ENCODE measurements at regions of chr7 and their contacts with region 1.

Region 1: DNA sequence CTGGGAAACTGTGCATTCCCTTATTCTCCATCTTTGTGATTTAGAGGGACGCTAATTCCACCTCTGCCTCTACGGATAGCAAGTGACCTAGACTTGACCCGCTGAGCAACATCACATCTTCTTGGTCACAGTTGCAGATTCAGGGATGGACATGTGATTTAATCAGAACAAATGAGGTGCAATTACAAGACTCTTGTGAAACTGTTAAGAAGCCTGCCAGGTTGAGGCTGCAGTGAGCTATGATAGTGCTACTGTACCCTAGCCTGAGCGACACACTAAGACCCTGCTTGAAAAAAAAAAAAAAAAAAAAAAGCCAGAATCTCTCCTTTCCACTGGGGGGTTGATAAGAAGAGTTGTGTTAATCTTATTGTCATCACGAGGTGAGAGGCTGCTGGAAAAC is 14.4 kb downstream of the MPLKIP start:
- DNase-seq: no peak
- H3K4me3 ChIP-seq: no peak overlapping the region
- H3K27ac ChIP-seq: no peak overlapping the region
- H3K4me1 ChIP-seq: no peaks in the 10 kb centered on the region
- H3K27me3 ChIP-seq: no peaks in the 10 kb centered on the region

Region 2: DNA sequence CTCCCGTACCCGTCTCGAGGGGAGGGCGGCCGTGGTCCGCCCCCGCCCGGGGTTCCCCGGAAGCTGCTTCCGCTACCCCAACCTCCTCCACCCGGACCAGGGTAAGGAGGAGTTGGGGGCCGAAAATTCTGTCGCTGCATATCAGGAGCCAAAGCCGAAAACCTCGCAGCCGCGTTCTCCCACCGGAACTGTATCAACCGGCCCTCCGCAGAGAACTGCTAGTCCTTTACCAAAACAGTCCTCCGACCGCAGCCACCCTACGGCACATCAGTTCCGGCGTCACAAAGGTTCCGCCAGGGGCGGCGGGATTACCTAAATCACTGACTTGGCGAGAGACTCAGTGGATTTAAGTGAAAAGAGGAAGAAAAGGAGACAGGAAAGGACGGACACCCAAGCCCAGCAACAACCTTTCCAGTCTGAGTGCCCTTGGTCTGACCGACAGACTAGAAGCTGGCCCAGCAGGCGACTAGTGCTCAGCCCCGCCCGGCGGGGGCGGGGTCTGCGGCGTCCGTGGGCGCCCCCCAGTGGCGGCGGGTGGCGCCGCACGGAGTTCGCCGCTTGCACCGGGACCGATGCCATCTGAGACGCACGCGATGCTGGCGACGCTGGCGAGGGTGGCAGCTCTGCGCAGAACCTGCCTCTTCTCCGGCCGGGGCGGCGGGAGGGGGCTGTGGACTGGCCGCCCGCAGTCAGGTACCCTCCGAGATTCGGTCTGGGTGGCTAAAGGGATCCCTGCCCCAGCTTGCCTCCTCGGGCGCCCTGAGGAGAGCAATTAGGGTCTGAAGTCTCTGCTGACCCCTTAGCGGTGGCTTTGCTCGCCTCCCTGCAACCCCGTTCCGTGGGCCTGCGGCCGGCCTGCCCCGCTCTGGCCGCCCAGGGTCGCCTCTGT is 14.7 kb after region 1 on chr7 and contains the starts of genes MPLKIP and SUGCT:
- CTCF ChIA-PET with region 1: interaction called, 12 read pairs
- POLR2A ChIA-PET with region 1: no interaction called
- DNase-seq: peak; percentile 92 to 96 (median 95)
- H3K4me3 ChIP-seq: peak within 1 kb of the TSS; percentile 84 to 99 (median 95)
- H3K27ac ChIP-seq: peak within 1 kb of the TSS; percentile 93 to 96
- H3K4me1 ChIP-seq: peaks cover 5 to 20% (median 12%) of the 10 kb centered on the region in 4 experiments
- H3K27me3 ChIP-seq: peaks cover 0 to 4% (median 0%) of the 10 kb centered on the region in 5 experiments

Region 3: GRCh38 chr7:40263752-40264390 is 143.9 kb after region 1 on chr7:
- CTCF ChIA-PET with region 1: no interaction called
- POLR2A ChIA-PET with region 1: no interaction called
- DNase-seq: no peak
- H3K4me3 ChIP-seq: no peak overlapping the region
- H3K27ac ChIP-seq: no peak overlapping the region
- H3K4me1 ChIP-seq: peaks cover 0 to 23% (median 8%) of the 10 kb centered on the region in 4 experiments
- H3K27me3 ChIP-seq: no peaks in the 10 kb centered on the region

Region 4: GRCh38 chr7:40761762-40762560 is 641.9 kb after region 1 on chr7:
- CTCF ChIA-PET with region 1: no interaction called
- POLR2A ChIA-PET with region 1: no interaction called
- DNase-seq: no peak
- H3K4me3 ChIP-seq: no peak overlapping the region
- H3K27ac ChIP-seq: no peak overlapping the region
- H3K4me1 ChIP-seq: peaks cover 3 to 30% (median 6%) of the 10 kb centered on the region in 4 experiments
- H3K27me3 ChIP-seq: peaks cover 0 to 2% (median 0%) of the 10 kb centered on the region in 5 experiments

Measured in common myeloid progenitor, CD34-positive (primary cell).